Pancreas (tissue), 10 donors: ENCODE measurements at regions of chr18 and their contacts with region 1.

Region 1: GRCh38 chr18:63848159-63848558 is 39.3 kb upstream of the SERPINB2 start:
- DNase-seq: peak in 1 of 6 donors; percentile 12
- ATAC-seq: peak; percentile 78 to 93 (median 86)
- H3K4me3 ChIP-seq: no peak overlapping the region
- H3K27ac ChIP-seq: no peak overlapping the region
- H3K4me1 ChIP-seq: no peaks in the 10 kb centered on the region
- H3K27me3 ChIP-seq: no peaks in the 10 kb centered on the region
- CTCF ChIP-seq: peak; percentile 9 to 40 (median 24)

Region 2: GRCh38 chr18:63518178-63519012 is 329.8 kb before region 1 on chr18:
- intact Hi-C with region 1: loop called in 2 of 3 experiments (anchors 10 kb)
- DNase-seq: peak in 4 of 6 donors; percentile 28 to 56 (median 48)
- ATAC-seq: peak; percentile 92 to 96 (median 93)
- H3K4me3 ChIP-seq: no peak overlapping the region
- H3K27ac ChIP-seq: no peak overlapping the region
- H3K4me1 ChIP-seq: no peaks in the 10 kb centered on the region
- H3K27me3 ChIP-seq: no peaks in the 10 kb centered on the region
- CTCF ChIP-seq: peak; percentile 56 to 78 (median 68)

Region 3: GRCh38 chr18:63697107-63697660 is 151.0 kb before region 1 on chr18:
- intact Hi-C with region 1: no loop called
- DNase-seq: no peak
- ATAC-seq: no peak
- H3K4me3 ChIP-seq: no peak overlapping the region
- H3K27ac ChIP-seq: no peak overlapping the region
- H3K4me1 ChIP-seq: no peaks in the 10 kb centered on the region
- H3K27me3 ChIP-seq: peaks cover 0 to 4% (median 0%) of the 10 kb centered on the region in 4 donors
- CTCF ChIP-seq: no peak